PC-3 (cell line): ENCODE measurements at regions of chr1 and their contacts with region 1.

Region 1: GRCh38 chr1:6185635-6186382 is 5.7 kb upstream of the CHD5 start:
- DNase-seq: peak; percentile 66
- ATAC-seq: peak; percentile 10; the same call in 1 of the 2 replicates
- H3K4me3 ChIP-seq: no peak overlapping the region
- H3K27ac ChIP-seq: no peak overlapping the region
- H3K4me1 ChIP-seq: peaks cover 14% of the 10 kb centered on the region
- H3K27me3 ChIP-seq: peaks cover 1% of the 10 kb centered on the region; the same call in 1 of the 2 replicates
- CTCF ChIP-seq: peak; percentile 88

Region 2: DNA sequence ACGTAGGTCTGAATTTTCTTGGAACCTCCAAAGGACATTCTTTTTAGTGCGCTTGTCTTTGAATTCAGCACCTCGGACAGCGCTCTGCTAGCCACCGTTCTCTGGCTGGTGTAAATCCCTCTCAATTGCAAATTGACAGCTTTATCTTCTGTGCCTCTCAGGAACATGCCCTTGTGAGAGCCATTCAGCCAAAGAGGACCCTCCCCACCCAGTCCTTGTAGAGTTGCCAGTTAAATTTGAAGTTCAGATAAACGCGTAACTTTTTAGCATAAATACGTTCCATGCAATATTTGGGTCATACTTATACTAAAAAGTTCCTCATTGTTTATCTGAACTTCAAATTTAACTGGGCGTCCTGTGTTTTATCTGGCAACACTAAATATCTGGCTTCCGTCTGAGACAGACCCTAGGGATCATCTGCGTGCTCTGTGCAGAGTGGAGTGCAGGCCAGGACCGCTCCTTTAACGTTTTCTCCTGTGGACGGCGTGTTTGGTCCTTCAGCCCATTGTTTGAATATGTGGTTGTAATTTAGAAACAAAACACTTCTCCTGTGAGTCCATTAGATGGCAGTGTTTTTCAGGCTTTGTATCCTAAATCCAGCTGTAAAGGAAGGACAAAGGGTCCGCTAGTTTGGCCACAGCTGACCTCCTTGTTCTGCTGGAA is 133.1 kb before region 1 on chr1:
- CTCF ChIA-PET with region 1: no interaction called
- POLR2A ChIA-PET with region 1: no interaction called
- intact Hi-C with region 1: loop called (anchors 5 kb)
- DNase-seq: peak; percentile 86
- ATAC-seq: peak; percentile 80
- H3K4me3 ChIP-seq: no peak overlapping the region
- H3K27ac ChIP-seq: no peak overlapping the region
- H3K4me1 ChIP-seq: no peaks in the 10 kb centered on the region
- H3K27me3 ChIP-seq: no peaks in the 10 kb centered on the region
- CTCF ChIP-seq: peak; percentile 94

Region 3: DNA sequence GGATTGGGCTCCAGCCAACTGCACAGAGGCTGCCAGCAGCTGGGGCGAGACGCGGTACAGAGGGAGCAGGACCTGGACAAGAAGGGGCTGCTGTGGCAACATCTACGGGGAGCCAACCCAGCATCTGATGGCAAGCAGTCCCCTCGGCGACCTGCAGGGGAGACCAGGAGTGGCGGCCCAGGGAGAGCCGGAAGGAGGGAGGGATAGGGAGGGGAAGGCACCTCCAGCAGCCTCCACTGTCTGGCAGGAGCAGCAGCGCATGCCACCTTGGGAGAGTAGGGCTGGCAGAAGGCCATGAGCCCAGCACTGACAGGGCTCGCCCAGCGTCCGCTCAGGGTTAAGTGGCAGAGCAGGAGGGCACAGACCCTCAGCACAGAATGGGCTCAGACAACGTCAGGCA is 23.0 kb before region 1 on chr1:
- CTCF ChIA-PET with region 1: no interaction called
- POLR2A ChIA-PET with region 1: no interaction called
- intact Hi-C with region 1: no loop called
- DNase-seq: no peak
- ATAC-seq: no peak
- H3K4me3 ChIP-seq: no peak overlapping the region
- H3K27ac ChIP-seq: no peak overlapping the region
- H3K4me1 ChIP-seq: peaks cover 7% of the 10 kb centered on the region
- H3K27me3 ChIP-seq: no peaks in the 10 kb centered on the region
- CTCF ChIP-seq: peak; percentile 27; the same call in 1 of the 2 replicates

Region 4: DNA sequence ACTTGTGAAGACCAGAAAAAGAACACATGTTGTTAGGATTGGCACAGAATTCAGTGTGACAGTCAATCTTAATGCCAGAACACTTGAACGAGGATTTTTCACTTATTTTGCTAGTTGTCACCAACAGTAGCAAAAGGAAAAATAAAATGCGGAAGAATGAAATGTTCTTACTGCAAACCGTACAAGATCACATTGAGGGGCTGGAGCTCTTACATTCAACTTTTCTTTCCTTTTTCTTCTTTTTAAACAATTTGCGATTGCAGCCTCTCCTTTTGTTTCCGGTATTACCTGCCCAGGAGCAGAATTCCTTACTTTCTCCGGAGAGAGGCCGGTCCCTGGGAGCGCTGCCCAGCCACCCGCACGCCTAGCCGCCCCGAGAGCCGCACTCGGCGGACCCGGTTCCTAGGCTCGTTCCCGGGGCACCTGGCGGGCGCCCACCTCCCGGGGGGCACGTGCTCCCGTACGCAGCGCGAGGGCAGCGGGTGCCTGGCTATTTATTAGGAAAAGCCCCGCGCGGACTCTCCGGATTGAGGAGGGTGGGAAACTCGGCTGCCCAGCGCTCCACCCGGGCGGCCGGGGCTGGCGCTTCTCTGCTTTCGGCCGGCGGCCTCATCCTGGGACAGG is 598.2 kb after region 1 on chr1:
- CTCF ChIA-PET with region 1: no interaction called
- POLR2A ChIA-PET with region 1: no interaction called
- intact Hi-C with region 1: no loop called
- DNase-seq: peak; percentile 41
- ATAC-seq: peak; percentile 1
- H3K4me3 ChIP-seq: peak overlapping the region; percentile 68
- H3K27ac ChIP-seq: peak overlapping the region; percentile 75
- H3K4me1 ChIP-seq: peaks cover 21% of the 10 kb centered on the region; the same call in 1 of the 2 replicates
- H3K27me3 ChIP-seq: no peaks in the 10 kb centered on the region
- CTCF ChIP-seq: no peak